Ovary (tissue), 10 donors: ENCODE measurements at regions of chr20 and their contacts with region 1.

Region 1: GRCh38 chr20:36555248-36555647 is 13.9 kb downstream of the MYL9 start:
- DNase-seq: no peak
- H3K4me3 ChIP-seq: no peak overlapping the region
- H3K27ac ChIP-seq: no peak overlapping the region
- H3K4me1 ChIP-seq: peaks cover 4% of the 10 kb centered on the region
- H3K27me3 ChIP-seq: no peaks in the 10 kb centered on the region
- CTCF ChIP-seq: no peak
- EP300 ChIP-seq: no peak
- POLR2A ChIP-seq: no peak

Region 2: DNA sequence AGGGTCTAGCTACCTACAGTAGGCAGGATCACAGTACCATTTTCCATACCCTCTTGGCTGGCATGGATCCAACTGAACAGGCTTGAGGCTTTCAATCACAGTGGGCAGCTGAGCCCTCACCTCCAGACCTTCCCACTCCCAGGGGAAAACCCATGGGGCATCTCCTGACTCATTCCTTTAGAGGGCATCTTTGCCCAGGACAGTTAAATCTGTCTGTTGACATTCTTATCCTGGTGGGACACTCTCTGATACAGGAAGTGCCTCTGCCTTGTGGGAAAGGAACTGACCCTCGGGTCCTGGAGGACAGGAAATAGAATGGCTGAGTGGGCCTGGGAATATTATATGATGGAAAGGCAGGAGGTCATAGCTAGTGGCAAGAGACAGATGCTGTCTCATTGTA is 410.9 kb before region 1 on chr20:
- intact Hi-C with region 1: no loop called
- DNase-seq: no peak
- H3K4me3 ChIP-seq: no peak overlapping the region
- H3K27ac ChIP-seq: no peak overlapping the region
- H3K4me1 ChIP-seq: no peaks in the 10 kb centered on the region
- H3K27me3 ChIP-seq: no peaks in the 10 kb centered on the region
- CTCF ChIP-seq: no peak
- EP300 ChIP-seq: no peak
- POLR2A ChIP-seq: no peak

Region 3: GRCh38 chr20:36591854-36592641 is 36.8 kb after region 1 on chr20:
- intact Hi-C with region 1: loop called in 2 of 4 experiments (anchors 5 kb)
- DNase-seq: peak in 3 of 5 donors; percentile 34 to 51 (median 48)
- H3K4me3 ChIP-seq: no peak overlapping the region
- H3K27ac ChIP-seq: no peak overlapping the region
- H3K4me1 ChIP-seq: peaks cover 8% of the 10 kb centered on the region
- H3K27me3 ChIP-seq: no peaks in the 10 kb centered on the region
- CTCF ChIP-seq: peak in 2 of 3 donors; percentile 33 to 46
- EP300 ChIP-seq: no peak
- POLR2A ChIP-seq: no peak

Region 4: DNA sequence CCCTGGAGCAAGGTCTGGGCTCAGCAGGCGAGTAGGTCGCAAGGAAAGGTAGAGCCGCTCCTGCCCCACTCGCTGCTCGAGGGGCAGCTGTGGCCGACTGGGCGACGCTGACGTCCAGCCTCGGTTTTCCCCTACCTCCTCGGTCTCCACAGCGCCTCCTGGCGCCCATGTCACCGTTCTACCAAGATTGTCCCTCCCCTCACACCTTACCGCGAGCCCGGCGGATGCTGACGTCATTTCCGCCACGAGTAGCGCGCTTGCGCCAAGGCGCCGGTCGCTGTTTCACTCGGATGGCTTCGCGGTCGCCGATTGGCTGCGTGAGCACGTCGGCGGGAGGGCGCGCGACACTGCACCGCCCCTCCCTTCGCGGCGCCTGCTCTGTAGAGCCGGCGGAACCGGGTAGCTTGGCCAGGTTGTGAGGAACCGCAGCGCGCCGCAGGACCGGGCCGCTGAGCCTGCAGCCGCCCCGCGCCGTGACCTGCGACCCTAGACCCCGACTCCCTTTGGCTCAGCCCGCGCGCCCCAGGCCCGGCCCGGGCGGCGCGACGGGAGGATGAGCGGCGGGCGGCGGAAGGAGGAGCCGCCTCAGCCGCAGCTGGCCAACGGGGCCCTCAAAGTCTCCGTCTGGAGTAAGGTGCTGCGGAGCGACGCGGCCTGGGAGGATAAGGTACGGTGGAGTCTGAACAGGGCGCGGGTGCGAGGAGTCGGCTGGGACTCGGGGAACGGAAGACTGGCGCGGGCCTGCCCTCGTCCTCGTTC is 50.3 kb after region 1 on chr20 and contains the start of gene RAB5IF:
- intact Hi-C with region 1: loop called in 2 of 4 experiments (anchors 5 kb)
- DNase-seq: peak; percentile 99 to 100 (median 100)
- H3K4me3 ChIP-seq: peak within 1 kb of the TSS; percentile 88
- H3K27ac ChIP-seq: peak within 1 kb of the TSS; percentile 52 to 64
- H3K4me1 ChIP-seq: peaks cover 8% of the 10 kb centered on the region
- H3K27me3 ChIP-seq: no peaks in the 10 kb centered on the region
- CTCF ChIP-seq: peak; percentile 94 to 99 (median 94)
- EP300 ChIP-seq: no peak
- POLR2A ChIP-seq: peak; percentile 23
- total RNA-seq, gene RAB5IF: 35.6 to 61.0 (median 40.9) TPM